Sigmoid colon (tissue), 7 donors: ENCODE measurements at regions of chr14 and their contacts with region 1.

Region 1: GRCh38 chr14:32129124-32129523 is 52.0 kb downstream of the ARHGAP5 start:
- DNase-seq: no peak
- H3K4me3 ChIP-seq: no peak overlapping the region
- H3K27ac ChIP-seq: peak overlapping the region; percentile 37 to 76 (median 56)
- H3K4me1 ChIP-seq: peaks cover 0 to 27% (median 18%) of the 10 kb centered on the region in 4 donors
- H3K27me3 ChIP-seq: no peaks in the 10 kb centered on the region
- CTCF ChIP-seq: no peak
- EP300 ChIP-seq: peak in 1 of 4 donors; percentile 5
- POLR2A ChIP-seq: no peak

Region 2: DNA sequence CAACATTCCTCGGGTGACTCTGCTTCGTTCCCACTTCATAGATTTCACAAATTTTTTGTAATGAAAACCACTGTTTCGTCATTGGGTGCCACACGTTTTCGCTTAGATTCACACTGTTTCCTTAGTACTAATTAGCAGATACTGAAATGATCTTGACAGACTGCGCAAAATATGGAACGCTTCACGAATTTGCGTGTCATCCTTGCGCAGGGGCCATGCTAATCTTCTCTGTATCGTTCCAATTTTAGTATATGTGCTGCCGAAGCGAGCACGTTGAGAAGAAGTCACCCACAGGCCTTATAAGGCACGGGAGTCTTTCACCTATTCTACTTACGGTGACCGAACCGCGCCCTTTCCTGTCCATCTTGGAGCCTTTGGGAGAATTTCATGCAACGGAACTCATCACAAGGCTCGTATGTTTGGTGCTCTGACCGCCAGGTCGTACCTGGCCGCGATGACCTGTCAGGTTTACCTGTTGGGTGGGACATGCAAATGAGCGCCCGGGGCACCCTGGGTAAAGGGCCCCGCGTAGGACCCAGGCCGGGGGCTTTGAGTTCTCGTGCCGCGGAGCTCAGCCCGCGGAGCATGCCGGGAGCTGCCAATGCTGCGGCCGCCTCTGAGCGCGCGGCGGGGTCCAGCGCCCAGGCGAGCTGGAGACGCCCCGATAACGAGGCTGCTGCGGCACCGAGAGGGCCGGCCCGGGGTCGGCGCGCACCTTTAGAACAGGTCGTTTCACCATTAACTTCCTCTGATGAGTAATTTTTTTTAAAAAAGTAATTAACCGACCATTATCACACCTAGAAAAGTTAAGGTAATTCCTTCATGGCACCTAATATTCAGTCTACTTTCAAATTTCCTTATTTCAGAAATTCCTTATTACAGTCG is 74.1 kb after region 1 on chr14 and contains the start of gene RNU6-8:
- intact Hi-C with region 1: loop called (anchors 5 kb)
- DNase-seq: peak; percentile 95
- H3K4me3 ChIP-seq: peak within 1 kb of the TSS; percentile 64 to 68 (median 65)
- H3K27ac ChIP-seq: peak within 1 kb of the TSS; percentile 78 to 87 (median 84)
- H3K4me1 ChIP-seq: peaks cover 0 to 12% (median 9%) of the 10 kb centered on the region in 4 donors
- H3K27me3 ChIP-seq: no peaks in the 10 kb centered on the region
- CTCF ChIP-seq: no peak
- EP300 ChIP-seq: no peak
- POLR2A ChIP-seq: peak; percentile 43 to 58
- total RNA-seq, gene RNU6-8: not detected